Panc1 (cell line): ENCODE measurements at regions of chr6 and their contacts with region 1.

Region 1: GRCh38 chr6:24004103-24005064 is 121.6 kb upstream of the NRSN1 start:
- DNase-seq: no peak
- ATAC-seq: no peak
- H3K4me3 ChIP-seq: no peak overlapping the region
- H3K27ac ChIP-seq: no peak overlapping the region
- H3K4me1 ChIP-seq: no peaks in the 10 kb centered on the region
- H3K27me3 ChIP-seq: no peaks in the 10 kb centered on the region
- CTCF ChIP-seq: no peak; the same call in 1 of the 2 replicates

Region 2: GRCh38 chr6:22873513-22874136 is 1130.8 kb before region 1 on chr6:
- CTCF ChIA-PET with region 1: no interaction called
- POLR2A ChIA-PET with region 1: interaction called, 11 read pairs
- in situ Hi-C with region 1: no loop called
- intact Hi-C with region 1: no loop called
- DNase-seq: no peak
- ATAC-seq: no peak
- H3K4me3 ChIP-seq: no peak overlapping the region
- H3K27ac ChIP-seq: no peak overlapping the region
- H3K4me1 ChIP-seq: no peaks in the 10 kb centered on the region
- H3K27me3 ChIP-seq: no peaks in the 10 kb centered on the region
- CTCF ChIP-seq: no peak

Region 3: GRCh38 chr6:23568292-23568691 is 436.1 kb before region 1 on chr6:
- CTCF ChIA-PET with region 1: no interaction called
- POLR2A ChIA-PET with region 1: no interaction called
- in situ Hi-C with region 1: no loop called
- intact Hi-C with region 1: no loop called
- DNase-seq: no peak
- ATAC-seq: no peak
- H3K4me3 ChIP-seq: no peak overlapping the region
- H3K27ac ChIP-seq: no peak overlapping the region
- H3K4me1 ChIP-seq: no peaks in the 10 kb centered on the region
- H3K27me3 ChIP-seq: no peaks in the 10 kb centered on the region
- CTCF ChIP-seq: no peak

Region 4: GRCh38 chr6:23910420-23910819 is 94.0 kb before region 1 on chr6:
- CTCF ChIA-PET with region 1: interaction called, 11 read pairs
- POLR2A ChIA-PET with region 1: no interaction called
- in situ Hi-C with region 1: no loop called
- intact Hi-C with region 1: no loop called
- DNase-seq: no peak
- ATAC-seq: no peak
- H3K4me3 ChIP-seq: no peak overlapping the region
- H3K27ac ChIP-seq: no peak overlapping the region
- H3K4me1 ChIP-seq: no peaks in the 10 kb centered on the region
- H3K27me3 ChIP-seq: no peaks in the 10 kb centered on the region
- CTCF ChIP-seq: no peak